ENCODE measurements at regions of chr1 and their contacts with region 1.

Region 1: GRCh38 chr1:151198255-151199127 is at the start of gene PIP5K1A:
- DNase-seq: peak; percentile 97 to 99 (median 98)
- ATAC-seq: peak; percentile 83
- H3K4me3 ChIP-seq: peak within 1 kb of the TSS; percentile 67 to 71
- H3K27ac ChIP-seq: peak within 1 kb of the TSS; percentile 87 to 95
- H3K4me1 ChIP-seq: peaks cover 3 to 45% of the 10 kb centered on the region in 2 donors
- H3K27me3 ChIP-seq: no peaks in the 10 kb centered on the region
- CTCF ChIP-seq: no peak
- polyA plus RNA-seq, gene PIP5K1A: 62.1 to 73.3 (median 68.3) TPM

Region 2: DNA sequence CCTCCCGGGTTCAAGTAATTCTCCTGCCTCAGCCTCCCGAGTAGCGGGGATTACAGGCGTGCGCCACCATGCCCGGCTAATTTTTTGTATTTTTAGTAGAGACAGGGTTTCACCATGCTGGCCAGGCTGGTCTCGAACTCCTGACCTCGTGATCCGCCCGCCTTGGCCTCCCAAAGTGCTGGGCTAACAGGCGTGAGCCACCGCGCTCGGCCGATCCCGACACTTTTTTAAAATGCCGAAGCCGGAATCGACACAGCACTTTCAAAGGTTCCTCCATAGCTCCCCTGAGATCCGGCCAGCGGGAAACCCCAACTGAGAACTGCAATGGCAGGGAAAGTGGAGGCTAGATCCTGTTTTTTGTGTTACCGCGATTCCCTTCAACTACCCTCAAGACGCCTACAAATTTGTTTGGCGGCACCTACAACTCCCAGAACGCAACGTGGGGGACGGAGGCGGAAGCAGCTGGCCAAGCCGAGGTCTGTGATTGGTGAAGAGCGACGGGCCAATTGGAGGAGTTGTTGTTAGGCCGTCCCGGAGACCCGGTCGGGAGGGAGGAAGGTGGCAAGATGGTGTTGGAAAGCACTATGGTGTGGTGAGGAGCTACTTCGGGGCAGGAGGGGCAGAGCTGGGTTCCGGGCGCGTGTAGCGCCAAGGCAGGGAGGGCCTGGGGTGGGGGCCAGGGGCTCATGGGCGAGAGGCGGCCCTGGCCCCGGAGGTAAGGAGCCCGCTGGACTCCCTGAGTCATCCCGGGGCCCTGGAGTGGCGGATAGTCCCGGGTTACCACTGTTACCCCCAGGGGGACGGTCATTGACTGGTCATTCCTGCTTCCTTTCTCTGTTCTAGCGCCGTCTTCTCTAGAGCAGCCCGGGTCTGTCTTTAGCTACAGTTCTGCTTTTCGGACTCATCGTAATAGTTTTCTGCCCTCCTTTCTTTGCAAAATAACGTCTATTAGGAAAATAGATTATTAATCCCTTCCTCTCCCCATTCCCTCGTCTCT is 56.0 kb after region 1 on chr1 and contains the start of gene PSMD4:
- intact Hi-C with region 1: loop called in 1 of 2 experiments (anchors 10 kb)
- DNase-seq: peak; percentile 93 to 98 (median 96)
- ATAC-seq: peak; percentile 98
- H3K4me3 ChIP-seq: peak within 1 kb of the TSS; percentile 95
- H3K27ac ChIP-seq: peak within 1 kb of the TSS; percentile 81 to 97
- H3K4me1 ChIP-seq: peaks cover 11 to 23% of the 10 kb centered on the region in 2 donors
- H3K27me3 ChIP-seq: no peaks in the 10 kb centered on the region
- CTCF ChIP-seq: no peak
- polyA plus RNA-seq, gene PSMD4: 141 to 158 (median 149) TPM

Region 3: DNA sequence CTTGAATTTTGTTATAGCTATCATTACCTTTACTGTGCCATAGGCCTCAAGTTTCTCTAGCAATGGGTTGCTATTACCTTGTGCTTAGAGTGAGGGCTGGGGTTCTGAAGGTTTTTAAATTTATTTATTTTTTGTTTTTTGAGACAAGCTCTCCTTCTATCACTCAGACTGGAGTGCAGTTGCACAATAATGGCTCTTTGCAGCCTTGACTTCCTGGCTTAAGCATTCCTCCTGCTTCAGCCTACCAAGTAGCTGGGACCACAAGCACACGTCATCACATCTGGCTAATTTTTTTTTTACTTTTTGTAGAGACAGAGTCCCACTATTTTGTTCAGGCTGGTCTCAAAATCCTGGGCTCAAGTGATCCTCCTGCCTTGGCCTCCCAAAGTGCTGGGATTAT is 454.9 kb after region 1 on chr1:
- intact Hi-C with region 1: no loop called
- DNase-seq: no peak
- ATAC-seq: peak; percentile 83
- H3K4me3 ChIP-seq: no peak overlapping the region
- H3K27ac ChIP-seq: peak overlapping the region in 1 of 2 donors; percentile 90
- H3K4me1 ChIP-seq: peaks cover 16 to 33% of the 10 kb centered on the region in 2 donors
- H3K27me3 ChIP-seq: no peaks in the 10 kb centered on the region
- CTCF ChIP-seq: no peak